Ovary (tissue), 10 donors: ENCODE measurements at regions of chr10 and their contacts with region 1.

Region 1: DNA sequence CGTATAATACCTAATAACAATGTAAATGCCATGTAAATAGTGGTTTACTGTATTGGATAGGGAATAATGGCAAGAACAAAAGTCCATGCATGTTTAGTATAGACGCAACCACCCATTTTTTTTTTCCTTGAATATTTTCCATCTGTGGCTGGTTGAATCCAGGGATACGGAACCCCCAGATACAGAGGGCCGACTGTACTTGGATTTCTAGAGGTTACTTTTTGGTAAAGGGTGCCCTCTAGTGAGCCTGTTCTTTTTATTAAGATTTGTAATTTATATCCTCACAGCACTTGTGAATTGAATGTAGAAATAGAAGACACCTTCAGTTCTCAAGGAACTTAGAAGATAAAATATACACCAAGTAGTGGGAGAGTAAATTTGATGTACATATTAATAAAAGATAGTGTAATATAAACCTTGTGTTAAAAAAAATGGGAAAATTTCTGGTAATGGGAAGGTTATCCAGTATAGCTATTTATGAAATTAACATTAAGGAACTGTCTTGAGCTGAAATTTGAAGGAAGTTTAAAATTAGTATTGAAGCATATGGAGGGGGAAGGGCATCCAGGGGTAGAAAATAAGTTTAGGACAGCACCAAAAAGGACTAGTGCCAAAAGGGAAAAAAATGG is 32.0 kb downstream of the EXOC6 start:
- DNase-seq: no peak
- H3K4me3 ChIP-seq: no peak overlapping the region
- H3K27ac ChIP-seq: no peak overlapping the region
- H3K4me1 ChIP-seq: no peaks in the 10 kb centered on the region
- H3K27me3 ChIP-seq: no peaks in the 10 kb centered on the region
- CTCF ChIP-seq: peak; percentile 5 to 18 (median 14)
- EP300 ChIP-seq: no peak
- POLR2A ChIP-seq: no peak

Region 2: GRCh38 chr10:92527716-92528115 is 352.6 kb before region 1 on chr10:
- intact Hi-C with region 1: loop called in 1 of 4 experiments (anchors 10 kb)
- DNase-seq: no peak
- H3K4me3 ChIP-seq: no peak overlapping the region
- H3K27ac ChIP-seq: no peak overlapping the region
- H3K4me1 ChIP-seq: no peaks in the 10 kb centered on the region
- H3K27me3 ChIP-seq: no peaks in the 10 kb centered on the region
- CTCF ChIP-seq: no peak
- EP300 ChIP-seq: no peak
- POLR2A ChIP-seq: no peak

Region 3: DNA sequence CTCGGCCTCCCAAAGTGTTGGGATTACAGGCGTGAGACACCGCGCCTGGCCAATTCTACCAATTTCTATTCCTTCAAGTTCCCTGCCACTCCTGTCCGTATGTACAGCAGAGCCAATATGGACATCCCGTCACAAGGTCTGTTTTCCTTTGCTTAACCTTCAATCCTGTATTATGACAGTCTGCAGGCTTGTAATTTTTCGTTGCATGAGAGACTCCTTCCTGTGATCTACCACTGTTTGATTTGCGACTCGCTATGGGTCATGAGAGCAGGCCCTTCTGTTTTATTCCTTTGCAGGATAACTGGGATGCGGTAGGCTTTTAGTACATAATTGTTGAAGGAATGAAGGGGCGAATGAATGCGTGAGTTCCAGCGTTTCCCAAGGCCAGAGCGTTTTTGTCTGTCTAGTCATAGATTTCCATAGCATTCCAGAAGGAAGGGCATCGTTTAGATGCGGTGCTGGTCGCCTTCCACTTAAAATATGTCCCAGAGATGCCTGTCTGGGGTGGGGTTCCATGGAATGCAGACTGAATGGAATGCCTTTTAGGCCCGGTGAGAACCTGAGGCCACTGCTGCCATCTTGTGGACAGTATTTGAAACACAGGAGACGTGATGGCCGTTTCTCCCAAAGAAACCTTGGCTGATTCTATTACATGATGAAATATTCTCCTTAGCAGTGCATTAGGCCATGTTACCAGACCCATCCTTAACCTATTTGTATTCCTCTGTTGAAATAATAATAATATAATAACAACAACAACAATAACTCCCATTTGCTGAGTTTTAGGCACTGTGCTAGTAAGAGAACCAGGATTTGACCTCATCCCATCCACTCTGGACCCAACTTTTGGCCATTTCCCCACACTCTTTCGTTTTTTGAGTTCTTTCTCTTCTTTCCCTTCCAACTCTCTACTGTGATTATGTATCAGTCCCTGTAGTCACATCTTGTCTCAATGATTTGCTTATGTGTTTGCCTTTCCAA is 408.6 kb after region 1 on chr10:
- intact Hi-C with region 1: loop called in 1 of 4 experiments (anchors 10 kb)
- DNase-seq: peak; percentile 40 to 71 (median 61)
- H3K4me3 ChIP-seq: no peak overlapping the region
- H3K27ac ChIP-seq: no peak overlapping the region
- H3K4me1 ChIP-seq: no peaks in the 10 kb centered on the region
- H3K27me3 ChIP-seq: no peaks in the 10 kb centered on the region
- CTCF ChIP-seq: peak; percentile 28 to 53 (median 33)
- EP300 ChIP-seq: no peak
- POLR2A ChIP-seq: no peak

Region 4: DNA sequence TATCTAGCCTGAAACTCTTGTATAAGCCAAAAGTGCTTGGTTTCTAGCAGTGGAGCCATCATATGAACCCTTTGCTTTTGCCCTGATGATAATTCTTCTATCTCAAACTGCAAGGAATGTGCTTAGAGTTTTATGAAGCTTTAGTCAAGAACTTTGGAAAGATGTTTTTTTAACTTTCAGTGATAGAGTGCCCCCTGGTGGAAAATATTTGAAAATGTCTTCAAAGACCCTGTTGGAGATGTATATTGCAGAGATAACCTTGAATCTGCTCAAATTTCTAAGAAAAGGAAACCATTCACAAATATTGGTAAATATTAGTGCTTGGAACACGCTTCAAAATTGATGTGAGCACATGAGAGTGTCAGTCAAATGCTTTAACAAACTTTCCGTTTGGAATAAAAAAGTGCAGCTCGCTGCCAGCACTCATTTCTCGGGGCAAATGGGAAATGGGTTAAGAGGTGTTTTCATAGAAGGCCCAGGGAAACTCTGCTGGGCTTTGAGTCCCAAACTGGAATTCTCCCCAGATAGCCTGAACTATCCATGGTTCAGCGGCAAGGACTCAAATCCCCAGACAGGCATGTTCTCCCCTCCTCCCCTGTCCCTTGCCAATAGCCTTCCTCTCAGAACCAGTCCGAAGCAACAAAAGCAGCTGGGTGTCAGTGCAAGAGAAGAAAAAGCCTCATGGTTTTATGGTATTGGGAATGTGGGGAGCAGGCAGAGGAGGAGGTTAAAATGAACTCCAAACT is 472.5 kb after region 1 on chr10:
- intact Hi-C with region 1: loop called in 1 of 4 experiments (anchors 10 kb)
- DNase-seq: no peak
- H3K4me3 ChIP-seq: no peak overlapping the region
- H3K27ac ChIP-seq: no peak overlapping the region
- H3K4me1 ChIP-seq: no peaks in the 10 kb centered on the region
- H3K27me3 ChIP-seq: no peaks in the 10 kb centered on the region
- CTCF ChIP-seq: peak in 2 of 3 donors; percentile 45 to 53
- EP300 ChIP-seq: no peak
- POLR2A ChIP-seq: no peak

Region 5: DNA sequence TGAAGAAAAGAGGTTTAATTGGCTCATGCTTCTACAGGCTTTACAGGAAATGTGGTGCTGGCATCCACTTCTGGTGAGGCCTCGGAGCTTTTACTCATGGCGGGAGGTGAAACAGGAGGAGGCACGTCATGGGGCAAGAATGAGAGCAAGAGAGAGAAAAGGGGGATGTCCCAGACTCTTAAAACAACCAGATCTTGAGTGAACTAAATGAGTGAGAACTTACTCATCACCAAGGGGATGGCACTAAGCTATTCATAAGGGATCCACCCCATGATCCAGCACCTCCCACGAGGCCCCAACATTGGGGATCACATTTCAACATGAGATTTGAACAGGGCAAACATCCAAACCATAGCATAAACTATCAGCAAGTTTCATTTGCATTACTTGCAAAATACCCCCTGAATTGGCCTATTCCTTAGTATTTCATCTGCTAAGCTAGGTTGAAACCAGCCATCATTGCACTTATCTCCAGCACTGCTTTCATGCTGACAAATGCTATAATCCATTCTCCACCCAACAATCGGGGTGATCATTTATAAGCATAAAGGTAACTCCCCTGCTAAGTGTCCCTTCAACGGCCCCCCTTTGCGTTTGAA is 1303.4 kb after region 1 on chr10:
- intact Hi-C with region 1: no loop called
- DNase-seq: no peak
- H3K4me3 ChIP-seq: no peak overlapping the region
- H3K27ac ChIP-seq: no peak overlapping the region
- H3K4me1 ChIP-seq: peaks cover 2% of the 10 kb centered on the region
- H3K27me3 ChIP-seq: no peaks in the 10 kb centered on the region
- CTCF ChIP-seq: no peak
- EP300 ChIP-seq: no peak
- POLR2A ChIP-seq: no peak